ENCODE measurements at regions of chr5 and their contacts with region 1.

Region 1: GRCh38 chr5:50751064-50751657 is 84.7 kb downstream of the PARP8 start:
- DNase-seq: peak; percentile 68 to 75 (median 70)
- H3K4me3 ChIP-seq: no peak overlapping the region
- H3K4me3 Mint-ChIP-seq: peak overlapping the region in 7 of 8 donors; percentile 46 to 84 (median 70)
- H3K27ac ChIP-seq: peak overlapping the region; percentile 25
- H3K27ac Mint-ChIP-seq: peak overlapping the region; percentile 77 to 91 (median 90)
- H3K4me1 ChIP-seq: peaks cover 52% of the 10 kb centered on the region
- H3K4me1 Mint-ChIP-seq: peaks cover 41 to 68% (median 56%) of the 10 kb centered on the region in 4 donors
- H3K27me3 ChIP-seq: no peaks in the 10 kb centered on the region
- H3K27me3 Mint-ChIP-seq: no peaks in the 10 kb centered on the region

Region 2: DNA sequence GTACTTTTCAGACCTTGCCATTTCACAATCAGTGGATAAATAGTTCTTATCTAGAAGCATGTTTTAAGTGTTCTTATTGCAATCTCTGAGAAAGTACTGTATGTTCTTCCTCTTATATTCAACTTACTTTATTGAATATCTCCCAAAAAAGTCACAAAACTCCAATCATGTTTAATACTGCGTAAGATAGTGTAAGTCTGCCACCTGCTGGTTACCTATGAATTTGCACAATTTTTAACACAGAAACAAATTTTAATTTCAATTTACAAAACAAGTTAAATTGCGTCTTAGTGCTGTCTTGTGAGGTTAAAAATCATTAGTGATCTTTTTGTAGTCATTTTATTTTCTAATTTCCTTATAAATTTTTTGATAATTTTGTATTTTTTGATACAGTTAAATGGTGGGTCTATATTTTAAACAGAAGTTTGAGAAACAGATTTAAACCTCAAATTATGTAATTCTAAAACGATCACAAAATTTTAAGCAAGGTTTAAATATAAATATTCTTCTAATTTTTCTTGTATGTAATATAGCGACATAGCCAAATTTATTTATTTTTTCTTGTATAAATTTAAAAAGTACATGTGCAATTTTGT is 425.8 kb before region 1 on chr5:
- CTCF ChIA-PET with region 1: no interaction called
- POLR2A ChIA-PET with region 1: no interaction called
- intact Hi-C with region 1: loop called (anchors 10 kb)
- DNase-seq: peak in 4 of 5 donors; percentile 14 to 28 (median 22)
- H3K4me3 ChIP-seq: no peak overlapping the region
- H3K4me3 Mint-ChIP-seq: no peak overlapping the region
- H3K27ac ChIP-seq: no peak overlapping the region
- H3K27ac Mint-ChIP-seq: no peak overlapping the region
- H3K4me1 ChIP-seq: peaks cover 18% of the 10 kb centered on the region
- H3K4me1 Mint-ChIP-seq: peaks cover 14 to 23% (median 17%) of the 10 kb centered on the region in 4 donors
- H3K27me3 ChIP-seq: no peaks in the 10 kb centered on the region
- H3K27me3 Mint-ChIP-seq: no peaks in the 10 kb centered on the region

Region 3: GRCh38 chr5:50365426-50366251 is 385.5 kb before region 1 on chr5:
- CTCF ChIA-PET with region 1: no interaction called
- POLR2A ChIA-PET with region 1: no interaction called
- intact Hi-C with region 1: no loop called
- DNase-seq: no peak
- H3K4me3 ChIP-seq: no peak overlapping the region
- H3K4me3 Mint-ChIP-seq: peak overlapping the region in 3 of 8 donors; percentile 1 to 29 (median 3)
- H3K27ac ChIP-seq: no peak overlapping the region
- H3K27ac Mint-ChIP-seq: peak overlapping the region in 6 of 7 donors; percentile 4 to 90 (median 67)
- H3K4me1 ChIP-seq: peaks cover 25% of the 10 kb centered on the region
- H3K4me1 Mint-ChIP-seq: peaks cover 29 to 57% (median 43%) of the 10 kb centered on the region in 4 donors
- H3K27me3 ChIP-seq: no peaks in the 10 kb centered on the region
- H3K27me3 Mint-ChIP-seq: no peaks in the 10 kb centered on the region

Region 4: GRCh38 chr5:50564079-50564478 is 187.1 kb before region 1 on chr5:
- CTCF ChIA-PET with region 1: no interaction called
- POLR2A ChIA-PET with region 1: no interaction called
- intact Hi-C with region 1: loop called (anchors 5 kb)
- DNase-seq: peak; percentile 37 to 79 (median 66)
- H3K4me3 ChIP-seq: no peak overlapping the region
- H3K4me3 Mint-ChIP-seq: peak overlapping the region in 7 of 8 donors; percentile 17 to 80 (median 70)
- H3K27ac ChIP-seq: peak overlapping the region; percentile 32
- H3K27ac Mint-ChIP-seq: peak overlapping the region; percentile 36 to 91 (median 75)
- H3K4me1 ChIP-seq: peaks cover 32% of the 10 kb centered on the region
- H3K4me1 Mint-ChIP-seq: peaks cover 19 to 51% (median 38%) of the 10 kb centered on the region in 4 donors
- H3K27me3 ChIP-seq: no peaks in the 10 kb centered on the region
- H3K27me3 Mint-ChIP-seq: no peaks in the 10 kb centered on the region

Region 5: DNA sequence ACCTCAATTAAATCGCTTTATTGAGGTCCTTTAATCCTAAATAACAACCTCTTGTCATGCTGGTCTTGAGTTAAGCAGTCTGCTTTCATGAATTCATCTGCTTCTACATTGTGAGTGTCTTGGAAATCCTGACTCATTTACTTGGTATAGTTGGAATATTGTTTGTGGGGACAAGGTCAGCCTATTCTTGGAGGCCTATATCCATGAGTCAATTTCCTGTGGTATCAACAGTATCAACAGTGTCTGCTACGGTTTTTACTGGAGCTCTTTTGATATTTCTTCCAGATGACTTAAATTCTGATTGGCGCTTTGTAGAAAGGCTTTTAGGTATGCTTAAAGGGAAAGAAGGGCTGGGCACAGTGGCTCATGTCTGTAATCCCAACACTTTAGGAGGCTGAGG is 156.0 kb before region 1 on chr5:
- CTCF ChIA-PET with region 1: interaction called, 3 read pairs
- POLR2A ChIA-PET with region 1: no interaction called
- intact Hi-C with region 1: loop called (anchors 2 kb)
- DNase-seq: no peak
- H3K4me3 ChIP-seq: no peak overlapping the region
- H3K4me3 Mint-ChIP-seq: peak overlapping the region in 2 of 8 donors; percentile 31 to 57
- H3K27ac ChIP-seq: no peak overlapping the region
- H3K27ac Mint-ChIP-seq: peak overlapping the region in 5 of 7 donors; percentile 46 to 90 (median 64)
- H3K4me1 ChIP-seq: peaks cover 56% of the 10 kb centered on the region
- H3K4me1 Mint-ChIP-seq: peaks cover 39 to 65% (median 46%) of the 10 kb centered on the region in 4 donors
- H3K27me3 ChIP-seq: no peaks in the 10 kb centered on the region
- H3K27me3 Mint-ChIP-seq: no peaks in the 10 kb centered on the region

Region 6: DNA sequence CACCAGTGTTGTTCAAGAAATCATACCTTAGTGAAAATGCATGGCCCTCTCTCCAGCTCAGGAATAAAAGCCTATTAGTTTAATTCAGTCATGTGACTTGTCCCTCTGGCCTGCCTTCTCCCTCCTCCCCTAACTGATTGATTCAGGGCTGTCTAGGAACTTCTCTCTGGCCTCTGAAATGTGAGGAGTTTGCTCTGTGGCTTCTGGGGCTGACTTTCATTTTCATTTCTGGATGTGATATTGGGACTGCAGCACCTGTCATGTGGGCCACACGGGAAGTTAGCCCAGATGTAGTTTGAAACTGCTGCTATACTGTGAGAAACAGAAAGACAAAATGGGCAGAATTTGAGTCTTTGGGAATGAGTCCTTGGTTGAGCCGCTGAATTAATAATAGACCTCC is 39.9 kb before region 1 on chr5:
- CTCF ChIA-PET with region 1: no interaction called
- POLR2A ChIA-PET with region 1: interaction called, 3 read pairs
- intact Hi-C with region 1: loop called (anchors 1 kb)
- DNase-seq: peak; percentile 69 to 87 (median 77)
- H3K4me3 ChIP-seq: peak overlapping the region; percentile 1 to 33
- H3K4me3 Mint-ChIP-seq: peak overlapping the region; percentile 79 to 91 (median 85)
- H3K27ac ChIP-seq: peak overlapping the region; percentile 65
- H3K27ac Mint-ChIP-seq: peak overlapping the region; percentile 90 to 96 (median 95)
- H3K4me1 ChIP-seq: peaks cover 94% of the 10 kb centered on the region
- H3K4me1 Mint-ChIP-seq: peaks cover 61 to 89% (median 74%) of the 10 kb centered on the region in 4 donors
- H3K27me3 ChIP-seq: no peaks in the 10 kb centered on the region
- H3K27me3 Mint-ChIP-seq: no peaks in the 10 kb centered on the region

Region 7: DNA sequence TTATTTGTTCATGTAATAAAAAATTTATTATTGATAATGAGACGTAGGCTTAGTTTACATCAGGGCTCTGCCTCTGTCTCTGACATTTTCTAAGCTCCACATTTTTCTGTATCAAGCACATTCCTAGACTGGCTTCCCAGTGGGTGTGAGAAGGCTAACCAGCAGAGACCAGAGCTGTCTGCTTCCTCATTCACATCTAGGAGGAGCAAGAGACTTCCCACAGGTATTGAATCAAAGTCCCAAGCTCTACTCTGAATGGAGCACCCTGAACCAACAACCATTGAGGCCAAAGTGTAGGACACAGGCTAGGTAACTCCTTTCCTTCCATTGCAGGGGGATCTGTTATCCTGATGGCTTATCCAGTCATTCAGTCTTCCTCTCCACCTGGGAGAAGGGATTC is 12.3 kb before region 1 on chr5:
- CTCF ChIA-PET with region 1: interaction called, 16 read pairs
- POLR2A ChIA-PET with region 1: no interaction called
- intact Hi-C with region 1: no loop called
- DNase-seq: no peak
- H3K4me3 ChIP-seq: no peak overlapping the region
- H3K4me3 Mint-ChIP-seq: no peak overlapping the region
- H3K27ac ChIP-seq: no peak overlapping the region
- H3K27ac Mint-ChIP-seq: peak overlapping the region in 5 of 7 donors; percentile 27 to 79 (median 62)
- H3K4me1 ChIP-seq: peaks cover 69% of the 10 kb centered on the region
- H3K4me1 Mint-ChIP-seq: peaks cover 53 to 80% (median 67%) of the 10 kb centered on the region in 4 donors
- H3K27me3 ChIP-seq: no peaks in the 10 kb centered on the region
- H3K27me3 Mint-ChIP-seq: no peaks in the 10 kb centered on the region

Measured in CD4-positive, alpha-beta memory T cell (primary cell).